ENCODE measurements at regions of chr9 and their contacts with region 1.

Region 1: GRCh38 chr9:131125128-131126058 is at the start of gene NUP214:
- DNase-seq: peak; percentile 100
- H3K4me3 Mint-ChIP-seq: peak within 1 kb of the TSS; percentile 96
- H3K27ac Mint-ChIP-seq: peak within 1 kb of the TSS; percentile 92
- H3K4me1 Mint-ChIP-seq: peaks cover 32% of the 10 kb centered on the region
- H3K27me3 Mint-ChIP-seq: no peaks in the 10 kb centered on the region
- total RNA-seq, gene NUP214: 40.2 to 41.1 TPM

Region 2: GRCh38 chr9:130693426-130694191 is 431.8 kb before region 1 on chr9 and contains the start of gene EXOSC2:
- CTCF ChIA-PET with region 1: no interaction called
- intact Hi-C with region 1: loop called (anchors 5 kb)
- DNase-seq: peak; percentile 99
- H3K4me3 Mint-ChIP-seq: peak within 1 kb of the TSS; percentile 90
- H3K27ac Mint-ChIP-seq: peak within 1 kb of the TSS; percentile 87
- H3K4me1 Mint-ChIP-seq: peaks cover 38% of the 10 kb centered on the region
- H3K27me3 Mint-ChIP-seq: no peaks in the 10 kb centered on the region
- total RNA-seq, gene EXOSC2: 70.1 to 72.6 TPM

Region 3: DNA sequence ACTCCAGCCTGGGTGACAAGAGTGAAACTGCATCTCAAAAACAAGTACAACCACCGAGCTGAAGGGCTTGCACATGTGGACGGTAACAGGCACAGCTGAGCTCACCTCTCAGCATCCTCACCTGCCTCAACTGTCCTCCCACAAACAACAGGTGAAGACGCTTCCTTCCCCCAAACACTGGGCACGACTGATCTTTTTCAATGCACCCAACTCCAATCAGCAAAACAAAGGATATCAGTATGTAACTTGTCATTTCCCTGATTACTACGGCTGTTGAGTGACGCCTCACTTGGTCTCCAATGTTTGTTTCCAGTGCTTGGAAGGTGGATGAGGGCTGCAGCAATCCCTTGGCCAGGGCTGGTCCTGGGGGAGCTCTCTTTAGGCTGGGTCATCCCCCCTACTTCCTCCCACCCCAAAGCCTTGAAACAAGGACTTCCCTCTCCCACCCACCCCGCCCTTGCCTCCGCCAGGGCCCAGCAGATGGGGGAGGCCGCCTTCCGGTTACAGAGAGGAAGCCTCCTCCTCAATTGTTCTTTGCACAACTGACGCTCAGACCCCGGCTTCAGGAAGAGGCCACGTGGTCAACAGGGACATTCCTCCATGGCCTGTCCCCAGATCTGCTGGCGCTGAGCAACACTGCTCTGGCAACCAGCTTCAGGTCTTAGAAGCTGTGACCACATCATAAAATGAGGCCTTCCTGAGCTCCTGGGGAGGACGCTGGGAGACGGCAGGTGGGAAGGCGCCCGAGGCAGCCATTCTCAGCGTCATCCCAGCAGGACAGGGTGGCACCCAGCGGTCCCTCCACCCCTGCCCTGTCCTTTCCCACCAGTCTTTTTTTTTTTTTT is 145.0 kb after region 1 on chr9:
- CTCF ChIA-PET with region 1: no interaction called
- intact Hi-C with region 1: loop called (anchors 2 kb)
- DNase-seq: peak; percentile 81
- H3K4me3 Mint-ChIP-seq: peak overlapping the region; percentile 96
- H3K27ac Mint-ChIP-seq: peak overlapping the region; percentile 99
- H3K4me1 Mint-ChIP-seq: peaks cover 56% of the 10 kb centered on the region
- H3K27me3 Mint-ChIP-seq: no peaks in the 10 kb centered on the region

Measured in activated naive CD4-positive, alpha-beta T cell treated with anti-CD3 and anti-CD28 coated beads for 36 hours (primary cell).